Naive thymus-derived CD4-positive, alpha-beta T cell (primary cell): ENCODE measurements at regions of chr15 and their contacts with region 1.

Region 1: DNA sequence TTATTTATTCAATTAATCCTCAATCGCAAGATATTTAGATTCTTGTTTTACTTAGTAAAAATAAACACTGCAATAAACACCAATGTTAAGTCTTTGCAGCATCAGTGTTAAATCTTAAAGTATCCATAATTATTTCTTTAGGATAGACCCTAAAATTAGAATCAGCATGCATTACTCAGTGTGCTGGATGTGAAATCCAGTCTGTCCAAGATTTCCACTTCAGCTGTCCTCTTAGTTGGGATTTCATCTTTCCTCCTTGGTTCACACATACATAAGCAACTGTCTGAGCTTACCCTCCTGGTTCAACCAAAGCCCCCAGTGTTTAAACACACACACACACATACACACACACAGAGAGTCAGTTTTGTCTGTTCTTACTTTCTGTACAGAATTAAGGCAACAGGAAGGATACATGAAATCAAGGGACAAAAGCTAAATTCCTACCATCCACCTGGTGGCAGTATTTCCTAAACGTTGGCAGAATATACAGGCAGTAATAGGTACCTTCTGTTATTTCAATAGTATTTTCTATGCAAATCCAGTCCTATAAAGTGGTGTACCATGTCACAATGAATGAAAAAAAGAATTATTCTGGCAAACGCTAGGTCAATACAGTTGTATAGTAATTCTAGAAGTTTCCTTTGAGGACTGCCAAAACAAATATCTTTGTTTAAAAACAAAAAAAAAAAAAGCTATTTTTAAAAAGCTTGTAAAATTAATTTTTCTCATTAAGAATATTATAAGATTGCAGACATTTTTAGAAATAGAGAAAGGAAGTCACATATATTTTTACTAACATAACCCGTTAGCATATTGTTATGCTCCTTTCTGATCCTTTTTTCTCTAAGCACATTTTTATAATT is 27.3 kb upstream of the DMXL2 start:
- DNase-seq: peak in 7 of 9 donors; percentile 53 to 76 (median 68)
- ATAC-seq: peak; percentile 86
- H3K4me3 ChIP-seq: no peak overlapping the region
- H3K4me3 Mint-ChIP-seq: no peak overlapping the region
- H3K27ac ChIP-seq: no peak overlapping the region
- H3K27ac Mint-ChIP-seq: no peak overlapping the region
- H3K4me1 ChIP-seq: no peaks in the 10 kb centered on the region
- H3K4me1 Mint-ChIP-seq: no peaks in the 10 kb centered on the region
- H3K27me3 ChIP-seq: no peaks in the 10 kb centered on the region
- H3K27me3 Mint-ChIP-seq: peaks cover 0 to 17% (median 0%) of the 10 kb centered on the region in 5 donors

Region 2: DNA sequence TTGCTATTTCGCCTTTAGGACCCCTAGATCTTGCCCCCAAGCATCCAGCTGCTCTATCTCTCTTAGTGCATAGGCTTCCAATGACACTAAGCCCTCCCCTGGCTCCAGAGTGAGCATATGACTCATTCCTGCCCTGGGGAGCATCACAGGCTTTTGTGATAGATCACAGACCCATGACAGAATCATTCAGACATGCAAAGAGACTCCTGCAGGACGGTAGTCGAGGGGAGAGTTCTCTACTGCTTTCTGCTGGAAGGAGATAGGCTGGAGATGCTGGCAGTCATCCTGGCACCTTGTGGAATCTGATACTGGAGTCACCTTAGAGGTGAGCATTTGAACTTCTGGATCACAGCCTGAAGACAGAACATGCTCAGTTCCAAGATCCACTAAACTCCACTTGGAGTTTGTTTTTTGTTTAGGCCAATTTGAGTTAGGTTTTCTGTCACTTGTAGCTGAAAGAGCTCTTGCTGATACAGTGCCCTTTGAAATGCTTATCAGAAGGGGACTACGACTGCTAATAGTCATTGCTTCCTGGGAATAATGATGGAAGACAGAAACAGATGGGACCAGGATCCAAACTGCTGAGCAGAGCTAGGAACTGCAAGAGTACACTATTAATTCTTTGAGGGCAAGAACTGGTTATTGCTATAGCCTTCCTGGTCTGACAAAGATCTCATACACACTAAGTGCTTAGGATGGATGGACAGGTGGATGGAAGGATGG is 76.6 kb after region 1 on chr15:
- CTCF ChIA-PET with region 1: interaction called, 10 read pairs
- POLR2A ChIA-PET with region 1: no interaction called
- intact Hi-C with region 1: no loop called
- DNase-seq: no peak
- ATAC-seq: peak; percentile 41
- H3K4me3 ChIP-seq: no peak overlapping the region
- H3K4me3 Mint-ChIP-seq: peak overlapping the region in 7 of 10 donors; percentile 14 to 50 (median 43)
- H3K27ac ChIP-seq: no peak overlapping the region
- H3K27ac Mint-ChIP-seq: peak overlapping the region in 6 of 9 donors; percentile 30 to 86 (median 65)
- H3K4me1 ChIP-seq: peaks cover 26 to 33% of the 10 kb centered on the region in 2 donors
- H3K4me1 Mint-ChIP-seq: peaks cover 36 to 82% (median 75%) of the 10 kb centered on the region in 7 donors
- H3K27me3 ChIP-seq: no peaks in the 10 kb centered on the region
- H3K27me3 Mint-ChIP-seq: no peaks in the 10 kb centered on the region

Region 3: DNA sequence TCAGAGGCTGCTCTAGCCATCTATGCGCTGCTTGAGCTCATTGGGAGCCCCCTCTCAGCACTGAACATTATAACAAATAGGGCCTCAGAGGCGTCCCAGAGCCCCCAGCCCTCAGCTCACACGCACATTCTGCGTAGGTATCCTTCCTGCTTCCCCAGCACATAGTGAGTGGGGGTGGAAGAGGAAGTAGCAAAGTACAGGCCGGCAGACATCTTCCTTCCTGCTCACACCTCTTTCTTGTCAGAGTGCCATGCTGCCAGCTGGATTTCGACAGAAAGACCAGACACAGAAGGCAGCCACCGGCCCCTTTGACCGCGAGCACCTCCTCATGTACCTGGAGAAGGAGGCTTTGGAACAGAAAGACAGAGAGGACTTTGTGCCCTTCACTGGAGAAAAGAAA is 118.1 kb after region 1 on chr15:
- CTCF ChIA-PET with region 1: interaction called, 16 read pairs
- POLR2A ChIA-PET with region 1: no interaction called
- intact Hi-C with region 1: no loop called
- DNase-seq: peak in 6 of 9 donors; percentile 27 to 55 (median 46)
- ATAC-seq: peak; percentile 47
- H3K4me3 ChIP-seq: no peak overlapping the region
- H3K4me3 Mint-ChIP-seq: peak overlapping the region in 9 of 10 donors; percentile 19 to 62 (median 48)
- H3K27ac ChIP-seq: no peak overlapping the region
- H3K27ac Mint-ChIP-seq: peak overlapping the region; percentile 56 to 95 (median 84)
- H3K4me1 ChIP-seq: peaks cover 3 to 8% of the 10 kb centered on the region in 2 donors
- H3K4me1 Mint-ChIP-seq: peaks cover 7 to 24% (median 14%) of the 10 kb centered on the region in 7 donors
- H3K27me3 ChIP-seq: no peaks in the 10 kb centered on the region
- H3K27me3 Mint-ChIP-seq: no peaks in the 10 kb centered on the region

Region 4: GRCh38 chr15:51907136-51907914 is 257.4 kb after region 1 on chr15:
- CTCF ChIA-PET with region 1: interaction called, 4 read pairs
- POLR2A ChIA-PET with region 1: no interaction called
- intact Hi-C with region 1: loop called in 1 of 2 experiments (anchors 1 kb)
- DNase-seq: no peak
- ATAC-seq: no peak
- H3K4me3 ChIP-seq: no peak overlapping the region
- H3K4me3 Mint-ChIP-seq: no peak overlapping the region
- H3K27ac ChIP-seq: no peak overlapping the region
- H3K27ac Mint-ChIP-seq: peak overlapping the region in 1 of 9 donors; percentile 10
- H3K4me1 ChIP-seq: no peaks in the 10 kb centered on the region
- H3K4me1 Mint-ChIP-seq: peaks cover 0 to 3% (median 0%) of the 10 kb centered on the region in 7 donors
- H3K27me3 ChIP-seq: no peaks in the 10 kb centered on the region
- H3K27me3 Mint-ChIP-seq: no peaks in the 10 kb centered on the region